CD4-positive, alpha-beta memory T cell (primary cell): ENCODE measurements at regions of chr17 and their contacts with region 1.

Region 1: GRCh38 chr17:39980351-39981206 is at the start of gene PSMD3:
- DNase-seq: peak; percentile 96 to 99 (median 99)
- H3K4me3 ChIP-seq: peak within 1 kb of the TSS; percentile 79 to 90
- H3K4me3 Mint-ChIP-seq: peak within 1 kb of the TSS; percentile 91 to 98 (median 95)
- H3K27ac ChIP-seq: peak within 1 kb of the TSS; percentile 96
- H3K27ac Mint-ChIP-seq: peak within 1 kb of the TSS; percentile 94 to 98 (median 97)
- H3K4me1 ChIP-seq: peaks cover 34% of the 10 kb centered on the region
- H3K4me1 Mint-ChIP-seq: peaks cover 22 to 45% (median 32%) of the 10 kb centered on the region in 4 donors
- H3K27me3 ChIP-seq: no peaks in the 10 kb centered on the region
- H3K27me3 Mint-ChIP-seq: no peaks in the 10 kb centered on the region
- total RNA-seq, gene PSMD3: 59.7 to 60.3 TPM

Region 2: GRCh38 chr17:39636927-39637736 is 343.4 kb before region 1 on chr17 and contains the start of gene STARD3:
- CTCF ChIA-PET with region 1: no interaction called
- POLR2A ChIA-PET with region 1: no interaction called
- intact Hi-C with region 1: loop called (anchors 5 kb)
- DNase-seq: peak; percentile 85 to 92 (median 87)
- H3K4me3 ChIP-seq: peak within 1 kb of the TSS; percentile 86 to 88
- H3K4me3 Mint-ChIP-seq: peak within 1 kb of the TSS; percentile 92 to 98 (median 96)
- H3K27ac ChIP-seq: peak within 1 kb of the TSS; percentile 97
- H3K27ac Mint-ChIP-seq: peak within 1 kb of the TSS; percentile 84 to 98 (median 96)
- H3K4me1 ChIP-seq: peaks cover 61% of the 10 kb centered on the region
- H3K4me1 Mint-ChIP-seq: peaks cover 33 to 62% (median 49%) of the 10 kb centered on the region in 4 donors
- H3K27me3 ChIP-seq: no peaks in the 10 kb centered on the region
- H3K27me3 Mint-ChIP-seq: peaks cover 0 to 1% of the 10 kb centered on the region in 2 donors
- total RNA-seq, gene STARD3: 105 to 110 TPM

Region 3: GRCh38 chr17:39822051-39822451 is 158.5 kb before region 1 on chr17:
- CTCF ChIA-PET with region 1: interaction called, 3 read pairs
- POLR2A ChIA-PET with region 1: interaction called, 4 read pairs
- intact Hi-C with region 1: loop called (anchors 5 kb)
- DNase-seq: peak in 1 of 5 donors; percentile 44
- H3K4me3 ChIP-seq: no peak overlapping the region
- H3K4me3 Mint-ChIP-seq: no peak overlapping the region
- H3K27ac ChIP-seq: peak overlapping the region; percentile 66
- H3K27ac Mint-ChIP-seq: peak overlapping the region; percentile 81 to 98 (median 94)
- H3K4me1 ChIP-seq: peaks cover 51% of the 10 kb centered on the region
- H3K4me1 Mint-ChIP-seq: peaks cover 36 to 61% (median 45%) of the 10 kb centered on the region in 4 donors
- H3K27me3 ChIP-seq: no peaks in the 10 kb centered on the region
- H3K27me3 Mint-ChIP-seq: no peaks in the 10 kb centered on the region

Region 4: GRCh38 chr17:39927101-39927928 is 53.3 kb before region 1 on chr17 and contains the starts of genes LRRC3C and ORMDL3:
- CTCF ChIA-PET with region 1: interaction called, 7 read pairs
- POLR2A ChIA-PET with region 1: interaction called, 20 read pairs
- intact Hi-C with region 1: loop called (anchors 1 kb)
- DNase-seq: peak; percentile 87 to 92 (median 90)
- H3K4me3 ChIP-seq: peak within 1 kb of the TSS; percentile 79 to 89
- H3K4me3 Mint-ChIP-seq: peak within 1 kb of the TSS; percentile 83 to 99 (median 96)
- H3K27ac ChIP-seq: peak within 1 kb of the TSS; percentile 82
- H3K27ac Mint-ChIP-seq: peak within 1 kb of the TSS; percentile 93 to 99 (median 95)
- H3K4me1 ChIP-seq: peaks cover 50% of the 10 kb centered on the region
- H3K4me1 Mint-ChIP-seq: peaks cover 19 to 54% (median 41%) of the 10 kb centered on the region in 4 donors
- H3K27me3 ChIP-seq: no peaks in the 10 kb centered on the region
- H3K27me3 Mint-ChIP-seq: no peaks in the 10 kb centered on the region
- total RNA-seq, gene LRRC3C: not detected
- total RNA-seq, gene ORMDL3: 79.6 to 87.2 TPM

Region 5: DNA sequence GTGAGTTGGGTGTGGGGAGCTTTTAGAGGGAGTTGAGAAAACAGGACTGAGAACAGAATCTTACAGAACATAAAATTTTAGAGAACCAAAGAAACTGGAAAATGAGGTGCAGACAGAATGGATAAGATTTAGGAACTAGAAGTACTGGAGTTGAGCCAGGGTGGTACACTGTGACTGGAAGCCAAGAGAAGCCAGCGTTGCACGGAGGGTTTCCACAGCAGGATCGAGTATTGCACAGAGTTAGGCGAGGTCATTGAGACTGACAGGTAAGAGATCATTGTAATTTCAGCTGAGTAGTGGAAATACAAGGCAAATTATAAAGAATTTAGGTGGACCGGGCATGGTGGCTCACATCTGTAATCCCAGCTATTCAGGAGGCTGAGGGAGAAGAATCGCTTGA is 11.2 kb before region 1 on chr17:
- CTCF ChIA-PET with region 1: interaction called, 197 read pairs
- POLR2A ChIA-PET with region 1: interaction called, 32 read pairs
- intact Hi-C with region 1: no loop called
- DNase-seq: no peak
- H3K4me3 ChIP-seq: no peak overlapping the region
- H3K4me3 Mint-ChIP-seq: no peak overlapping the region
- H3K27ac ChIP-seq: no peak overlapping the region
- H3K27ac Mint-ChIP-seq: no peak overlapping the region
- H3K4me1 ChIP-seq: no peaks in the 10 kb centered on the region
- H3K4me1 Mint-ChIP-seq: peaks cover 5 to 13% (median 11%) of the 10 kb centered on the region in 4 donors
- H3K27me3 ChIP-seq: no peaks in the 10 kb centered on the region
- H3K27me3 Mint-ChIP-seq: peaks cover 9 to 17% of the 10 kb centered on the region in 2 donors